Common myeloid progenitor, CD34-positive (primary cell): ENCODE measurements at regions of chr19 and their contacts with region 1.

Region 1: DNA sequence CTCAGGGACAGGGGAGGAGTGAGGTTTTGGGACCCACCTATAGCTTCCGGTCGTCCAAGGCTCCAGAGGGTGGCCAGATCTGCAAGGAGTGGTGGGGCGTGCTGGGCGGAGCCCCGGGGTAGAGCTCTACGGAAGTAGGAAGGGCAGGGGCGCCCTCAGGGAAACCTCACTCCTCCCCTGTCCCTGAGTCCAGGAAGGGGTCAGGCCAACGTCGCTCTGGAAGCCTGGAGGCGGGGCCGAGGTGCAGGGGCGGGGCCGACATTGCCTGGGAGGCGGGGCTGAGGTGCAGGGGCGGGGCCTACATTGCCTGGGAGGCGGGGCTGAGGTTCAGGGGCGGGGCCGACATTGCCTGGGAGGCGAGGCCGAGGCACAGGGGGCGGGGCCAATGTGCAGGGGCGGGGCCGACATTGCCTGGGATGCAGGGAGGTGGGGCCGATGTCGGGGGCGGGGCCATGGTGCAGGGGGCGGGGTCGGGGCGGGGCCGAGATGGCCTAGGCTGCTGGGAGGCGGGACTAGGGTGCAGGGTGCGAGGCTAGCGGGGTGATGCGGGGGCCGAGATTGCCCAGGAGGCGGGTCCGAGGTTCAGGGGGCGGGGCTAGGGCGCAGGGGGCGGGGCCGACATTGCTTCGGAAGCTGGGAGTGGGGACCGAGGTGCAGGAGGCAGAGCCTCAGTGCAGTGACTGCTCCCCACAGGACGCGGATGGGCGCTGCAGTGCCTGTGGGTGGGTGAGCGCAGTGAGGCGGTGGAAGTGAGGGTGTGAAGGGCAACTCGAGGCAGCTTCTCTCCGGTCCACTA is 4.9 kb upstream of the PALM start:
- DNase-seq: peak; percentile 91 to 96 (median 95)
- H3K4me3 ChIP-seq: peak overlapping the region; percentile 43 to 84 (median 67)
- H3K27ac ChIP-seq: peak overlapping the region in 1 of 2 experiments; percentile 76
- H3K4me1 ChIP-seq: peaks cover 0 to 44% (median 37%) of the 10 kb centered on the region in 4 experiments
- H3K27me3 ChIP-seq: no peaks in the 10 kb centered on the region

Region 2: DNA sequence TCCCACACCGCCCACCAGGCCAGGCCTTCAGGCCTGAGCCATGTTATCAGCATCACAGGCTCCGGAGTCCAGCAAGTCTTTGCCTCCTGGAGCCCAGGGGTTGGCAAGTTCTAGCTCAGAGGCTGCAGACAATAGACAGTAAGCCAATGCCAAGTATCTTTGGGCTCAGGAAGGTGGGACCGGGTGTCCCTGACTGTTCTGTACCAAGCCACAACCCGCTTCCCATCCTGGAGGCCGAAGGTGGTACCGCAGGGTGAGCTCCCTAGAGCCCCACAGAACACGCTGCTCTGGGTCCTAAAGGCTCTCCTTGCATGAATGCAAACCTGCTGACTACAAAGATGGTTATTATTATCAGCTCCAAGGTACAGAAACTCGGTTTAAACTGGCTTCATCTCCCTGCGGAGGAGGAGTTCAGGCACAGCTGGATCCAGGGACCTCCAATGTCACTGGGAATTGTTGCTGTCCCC is 33.2 kb before region 1 on chr19:
- CTCF ChIA-PET with region 1: interaction called, 13 read pairs
- POLR2A ChIA-PET with region 1: interaction called, 3 read pairs
- DNase-seq: peak in 2 of 3 donors; percentile 67 to 69
- H3K4me3 ChIP-seq: no peak overlapping the region
- H3K27ac ChIP-seq: no peak overlapping the region
- H3K4me1 ChIP-seq: peaks cover 0 to 18% (median 14%) of the 10 kb centered on the region in 4 experiments
- H3K27me3 ChIP-seq: peaks cover 0 to 12% (median 5%) of the 10 kb centered on the region in 5 experiments

Region 3: DNA sequence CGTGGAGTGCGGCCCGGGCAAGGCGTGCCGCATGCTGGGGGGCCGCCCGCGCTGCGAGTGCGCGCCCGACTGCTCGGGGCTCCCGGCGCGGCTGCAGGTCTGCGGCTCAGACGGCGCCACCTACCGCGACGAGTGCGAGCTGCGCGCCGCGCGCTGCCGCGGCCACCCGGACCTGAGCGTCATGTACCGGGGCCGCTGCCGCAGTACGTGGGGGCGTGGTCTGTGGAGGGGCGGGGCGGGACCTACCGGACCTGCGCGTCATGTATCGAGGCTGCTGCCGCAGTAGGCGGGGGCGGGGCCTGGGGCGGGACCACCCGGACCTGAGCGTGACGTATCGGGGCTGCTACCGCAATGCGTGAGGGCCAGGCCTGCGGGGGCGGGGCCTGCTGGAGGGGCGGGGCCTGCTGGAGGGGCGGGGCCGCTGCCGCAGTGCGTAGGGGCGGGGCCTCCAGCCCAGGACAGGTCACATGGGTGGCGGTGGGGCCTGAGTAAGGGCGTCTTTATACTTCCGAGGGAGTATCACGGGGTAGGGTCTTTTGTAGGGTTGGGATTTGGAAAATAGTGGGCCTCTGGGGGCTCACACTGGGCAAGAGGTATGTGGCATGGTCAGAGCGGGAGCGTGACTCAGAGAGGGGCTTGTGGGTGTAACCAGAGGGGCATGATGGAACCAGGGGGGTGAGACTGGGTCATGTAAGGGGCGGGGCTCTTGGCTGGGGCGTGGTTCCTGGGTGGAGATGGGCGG is 23.4 kb before region 1 on chr19:
- CTCF ChIA-PET with region 1: interaction called, 8 read pairs
- POLR2A ChIA-PET with region 1: interaction called, 20 read pairs
- DNase-seq: peak; percentile 98 to 99 (median 99)
- H3K4me3 ChIP-seq: peak overlapping the region; percentile 30 to 84 (median 70)
- H3K27ac ChIP-seq: peak overlapping the region; percentile 58 to 88
- H3K4me1 ChIP-seq: peaks cover 0 to 33% (median 26%) of the 10 kb centered on the region in 4 experiments
- H3K27me3 ChIP-seq: peaks cover 0 to 24% (median 7%) of the 10 kb centered on the region in 5 experiments